Common myeloid progenitor, CD34-positive (primary cell): ENCODE measurements at regions of chr7 and their contacts with region 1.

Region 1: DNA sequence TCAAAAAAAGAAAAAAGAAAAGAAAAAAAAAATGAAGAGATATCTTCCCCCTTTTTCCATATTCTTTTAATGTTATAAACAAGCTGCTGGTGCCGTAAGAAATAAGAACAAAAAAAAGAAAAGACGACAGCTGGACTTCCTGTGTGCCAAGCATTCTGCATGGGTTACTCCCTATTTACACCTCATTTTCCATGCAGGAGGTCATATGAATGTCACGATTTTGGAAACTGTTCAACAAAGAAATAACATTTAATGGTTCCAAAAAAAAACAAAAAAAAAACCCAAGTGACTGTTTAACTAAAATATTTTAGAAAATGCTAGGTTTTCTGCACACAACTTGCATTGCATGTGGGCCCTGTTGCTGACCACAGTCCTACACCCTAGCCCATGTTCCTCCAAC is 159.3 kb downstream of the TNS3 start:
- DNase-seq: no peak
- H3K4me3 ChIP-seq: no peak overlapping the region
- H3K27ac ChIP-seq: no peak overlapping the region
- H3K4me1 ChIP-seq: peaks cover 0 to 11% (median 0%) of the 10 kb centered on the region in 4 experiments
- H3K27me3 ChIP-seq: no peaks in the 10 kb centered on the region

Region 2: DNA sequence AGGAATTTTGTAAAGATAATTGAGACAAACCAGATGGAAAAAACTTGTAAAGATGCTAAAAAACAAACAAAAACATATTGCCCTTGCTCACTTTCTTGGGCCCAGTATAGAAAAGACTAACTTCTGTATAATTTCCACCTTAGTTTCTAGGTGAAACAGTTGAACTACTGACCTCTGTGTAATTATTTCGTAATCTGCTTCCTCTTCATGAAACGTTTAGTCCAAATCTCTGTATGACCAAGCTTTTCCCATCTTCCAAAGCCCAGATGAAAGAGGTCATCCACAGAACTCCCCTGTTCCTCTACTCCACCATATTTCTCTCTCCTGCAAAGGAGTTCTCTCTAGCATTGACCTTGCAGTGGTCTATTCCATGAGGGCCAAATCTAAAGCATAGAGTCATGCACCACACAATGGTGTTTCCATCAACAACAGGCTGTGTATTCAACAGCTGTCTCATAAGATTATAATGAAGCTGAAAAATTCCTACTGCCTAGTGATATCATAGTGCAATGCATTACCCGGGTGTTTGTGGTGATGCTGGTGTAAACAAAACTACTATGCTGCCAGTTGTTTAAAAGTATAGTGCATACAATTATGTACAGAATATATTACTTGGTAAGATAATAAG is 488.3 kb before region 1 on chr7:
- CTCF ChIA-PET with region 1: no interaction called
- POLR2A ChIA-PET with region 1: no interaction called
- DNase-seq: no peak
- H3K4me3 ChIP-seq: no peak overlapping the region
- H3K27ac ChIP-seq: no peak overlapping the region
- H3K4me1 ChIP-seq: no peaks in the 10 kb centered on the region
- H3K27me3 ChIP-seq: no peaks in the 10 kb centered on the region

Region 3: GRCh38 chr7:47392231-47392759 is 30.3 kb before region 1 on chr7:
- CTCF ChIA-PET with region 1: no interaction called
- POLR2A ChIA-PET with region 1: no interaction called
- DNase-seq: no peak
- H3K4me3 ChIP-seq: no peak overlapping the region
- H3K27ac ChIP-seq: no peak overlapping the region
- H3K4me1 ChIP-seq: no peaks in the 10 kb centered on the region
- H3K27me3 ChIP-seq: no peaks in the 10 kb centered on the region

Region 4: GRCh38 chr7:47435889-47436312 is 13.3 kb after region 1 on chr7:
- CTCF ChIA-PET with region 1: interaction called, 13 read pairs
- POLR2A ChIA-PET with region 1: no interaction called
- DNase-seq: peak; percentile 27 to 51 (median 49)
- H3K4me3 ChIP-seq: no peak overlapping the region
- H3K27ac ChIP-seq: no peak overlapping the region
- H3K4me1 ChIP-seq: no peaks in the 10 kb centered on the region
- H3K27me3 ChIP-seq: no peaks in the 10 kb centered on the region

Region 5: DNA sequence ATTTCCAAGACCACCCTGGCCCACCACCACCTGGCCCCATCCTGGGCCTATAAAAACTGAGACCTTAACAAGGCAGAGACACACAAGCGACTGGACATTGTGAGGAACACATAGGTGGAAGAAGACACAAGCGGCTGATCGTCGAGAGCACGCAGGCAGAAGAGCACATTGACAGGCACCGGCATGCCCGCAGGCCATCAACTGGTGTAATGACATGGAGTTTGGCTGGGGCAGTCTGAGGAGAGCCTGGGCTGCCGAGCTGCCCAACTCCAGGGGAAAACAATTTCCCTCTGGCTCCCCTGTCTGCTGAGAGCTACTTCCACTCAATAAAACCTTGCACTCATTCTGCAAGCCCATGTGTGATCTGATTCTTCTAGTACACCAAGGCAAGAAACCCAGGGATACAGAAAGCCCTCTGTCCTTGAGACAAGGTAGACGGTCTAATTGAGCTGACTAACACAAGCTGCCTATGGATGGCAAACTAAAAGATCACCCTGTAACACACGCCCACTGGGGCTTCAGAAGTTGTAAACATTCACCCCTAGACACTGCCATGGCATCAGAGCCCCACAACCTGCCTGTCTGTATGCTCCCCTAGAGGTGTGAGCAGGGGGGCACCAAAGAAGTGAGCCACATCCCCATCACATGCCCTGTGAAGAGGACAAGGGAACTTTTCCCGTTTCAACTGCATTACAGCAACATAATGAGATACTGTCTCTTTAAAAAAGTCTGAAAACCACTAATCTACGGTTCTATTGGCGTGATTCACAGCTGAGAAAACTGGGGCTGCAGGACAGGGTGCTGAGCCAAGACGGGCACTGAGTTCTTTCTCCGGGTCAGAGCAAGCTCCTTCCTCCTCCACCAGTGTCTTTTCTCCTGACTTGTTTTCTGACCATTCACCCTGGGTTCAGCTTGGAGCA is 177.8 kb after region 1 on chr7:
- CTCF ChIA-PET with region 1: no interaction called
- POLR2A ChIA-PET with region 1: no interaction called
- DNase-seq: peak in 1 of 3 donors; percentile 21
- H3K4me3 ChIP-seq: peak overlapping the region in 3 of 7 experiments; percentile 28 to 33 (median 32)
- H3K27ac ChIP-seq: no peak overlapping the region
- H3K4me1 ChIP-seq: peaks cover 11 to 35% (median 30%) of the 10 kb centered on the region in 4 experiments
- H3K27me3 ChIP-seq: no peaks in the 10 kb centered on the region

Region 6: GRCh38 chr7:48280100-48280499 is 857.5 kb after region 1 on chr7:
- CTCF ChIA-PET with region 1: no interaction called
- POLR2A ChIA-PET with region 1: no interaction called
- DNase-seq: peak; percentile 36 to 94 (median 89)
- H3K4me3 ChIP-seq: no peak overlapping the region
- H3K27ac ChIP-seq: no peak overlapping the region
- H3K4me1 ChIP-seq: peaks cover 7 to 37% (median 18%) of the 10 kb centered on the region in 4 experiments
- H3K27me3 ChIP-seq: no peaks in the 10 kb centered on the region